Adrenal gland (tissue), 19 donors: ENCODE measurements at regions of chr5 and their contacts with region 1.

Region 1: DNA sequence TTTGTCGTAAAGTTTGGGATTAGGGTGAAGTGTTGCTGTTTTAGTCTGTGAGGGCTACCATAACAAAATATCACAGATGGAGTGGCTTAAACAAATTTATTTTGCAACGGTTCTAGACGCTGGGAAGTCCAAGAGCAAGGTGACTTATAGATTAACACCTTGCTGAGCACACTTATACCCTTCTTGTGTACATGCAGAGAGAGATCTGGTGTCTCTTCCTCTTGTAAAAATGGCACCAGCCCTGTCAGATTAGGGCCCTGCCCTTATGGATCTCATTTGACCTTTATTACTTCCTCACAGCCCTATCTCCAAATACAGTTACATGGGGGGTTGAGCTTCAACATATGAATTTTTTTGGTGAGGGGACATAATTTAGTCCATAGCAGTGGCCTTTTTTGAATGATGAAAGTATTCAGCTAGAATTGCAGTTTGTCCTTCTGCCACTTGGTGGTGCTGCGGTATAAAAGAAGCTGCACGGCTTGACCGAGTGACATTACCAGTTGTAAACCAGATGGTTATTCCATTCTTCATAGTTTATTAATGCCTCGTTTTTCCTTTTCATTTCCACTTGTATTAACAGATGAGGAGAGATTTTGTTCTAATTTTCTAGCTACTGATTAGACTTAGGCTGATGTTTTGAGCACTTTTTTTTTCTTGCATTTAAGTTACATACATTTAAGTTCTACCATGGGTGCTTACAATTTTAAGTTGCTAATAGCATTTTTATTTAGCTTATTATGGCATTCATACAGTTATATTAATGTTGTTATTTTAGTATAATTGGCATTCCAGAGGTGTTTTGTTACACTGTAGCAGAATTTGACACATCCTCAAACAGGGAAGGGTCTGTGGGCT is 19.4 kb downstream of the DCP2 start:
- DNase-seq: peak; percentile 60 to 93 (median 76)
- H3K4me3 ChIP-seq: no peak overlapping the region
- H3K27ac ChIP-seq: no peak overlapping the region
- H3K4me1 ChIP-seq: peaks cover 0 to 3% of the 10 kb centered on the region in 2 donors
- H3K27me3 ChIP-seq: no peaks in the 10 kb centered on the region
- CTCF ChIP-seq: peak; percentile 83 to 94 (median 88)
- POLR2A ChIP-seq: no peak

Region 2: DNA sequence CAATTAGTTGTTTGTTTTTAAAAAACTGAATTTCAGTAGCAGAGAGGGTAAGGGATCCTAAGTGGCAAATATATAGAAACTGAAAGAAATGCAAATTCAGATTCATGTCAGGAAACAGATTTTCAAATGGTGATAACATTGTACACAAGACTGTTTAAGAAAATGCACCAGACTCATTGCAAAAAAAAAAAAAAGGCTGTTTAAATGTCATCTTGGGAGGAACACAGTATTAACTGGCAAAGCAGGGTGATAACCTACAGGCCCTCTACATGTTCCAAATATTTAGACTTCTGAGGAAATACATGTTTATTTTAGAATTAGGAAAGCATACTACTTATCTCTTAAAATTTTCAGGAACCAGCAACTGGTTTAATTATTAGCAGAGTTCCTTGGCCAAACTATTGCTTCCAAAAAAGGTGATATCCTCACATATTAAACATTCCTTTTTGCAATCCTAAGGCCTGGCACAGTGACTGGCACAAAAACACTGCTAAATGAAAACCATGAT is 324.3 kb after region 1 on chr5:
- intact Hi-C with region 1: loop called in 1 of 2 experiments (anchors 5 kb)
- DNase-seq: no peak
- H3K4me3 ChIP-seq: no peak overlapping the region
- H3K27ac ChIP-seq: no peak overlapping the region
- H3K4me1 ChIP-seq: no peaks in the 10 kb centered on the region
- H3K27me3 ChIP-seq: no peaks in the 10 kb centered on the region
- CTCF ChIP-seq: no peak
- POLR2A ChIP-seq: no peak

Region 3: DNA sequence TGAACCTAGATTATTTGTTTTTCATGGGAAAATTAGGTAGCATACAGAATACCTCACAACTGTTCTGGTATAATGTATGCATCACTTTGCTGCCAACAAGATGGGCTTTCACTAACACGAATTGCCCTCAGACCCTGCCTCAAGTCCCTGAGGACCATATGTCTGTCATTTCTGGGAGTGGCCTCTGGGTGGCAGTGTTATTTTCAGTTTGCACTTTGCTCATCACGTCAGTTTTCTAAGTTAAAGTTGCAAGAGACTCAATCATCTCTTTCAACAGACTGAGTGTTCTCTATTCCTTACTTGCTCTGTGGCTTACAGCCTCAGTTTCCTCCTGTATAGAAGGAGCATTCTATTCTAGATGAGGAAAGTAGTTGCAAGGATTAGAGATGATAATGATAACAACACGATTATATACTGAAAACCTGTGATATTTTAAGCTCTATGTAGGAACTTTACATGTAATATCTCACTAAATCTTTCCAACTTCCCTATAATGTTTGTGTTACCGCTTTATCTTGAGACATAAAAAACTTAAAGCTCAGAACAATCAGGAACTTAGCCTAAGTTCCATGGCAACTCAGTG is 383.1 kb after region 1 on chr5:
- intact Hi-C with region 1: loop called in 1 of 2 experiments (anchors 5 kb)
- DNase-seq: peak; percentile 24 to 78 (median 59)
- H3K4me3 ChIP-seq: no peak overlapping the region
- H3K27ac ChIP-seq: no peak overlapping the region
- H3K4me1 ChIP-seq: peaks cover 0 to 12% of the 10 kb centered on the region in 2 donors
- H3K27me3 ChIP-seq: no peaks in the 10 kb centered on the region
- CTCF ChIP-seq: peak; percentile 54 to 76 (median 72)
- POLR2A ChIP-seq: no peak

Region 4: GRCh38 chr5:113606298-113607134 is 610.5 kb after region 1 on chr5:
- intact Hi-C with region 1: loop called in 1 of 2 experiments (anchors 5 kb)
- DNase-seq: peak; percentile 22 to 72 (median 45)
- H3K4me3 ChIP-seq: peak overlapping the region in 1 of 4 donors; percentile 32
- H3K27ac ChIP-seq: no peak overlapping the region
- H3K4me1 ChIP-seq: peaks cover 4 to 6% of the 10 kb centered on the region in 2 donors
- H3K27me3 ChIP-seq: no peaks in the 10 kb centered on the region
- CTCF ChIP-seq: peak; percentile 56 to 88 (median 78)
- POLR2A ChIP-seq: no peak